CD8-positive, alpha-beta T cell (primary cell): ENCODE measurements at regions of chr11 and their contacts with region 1.

Region 1: DNA sequence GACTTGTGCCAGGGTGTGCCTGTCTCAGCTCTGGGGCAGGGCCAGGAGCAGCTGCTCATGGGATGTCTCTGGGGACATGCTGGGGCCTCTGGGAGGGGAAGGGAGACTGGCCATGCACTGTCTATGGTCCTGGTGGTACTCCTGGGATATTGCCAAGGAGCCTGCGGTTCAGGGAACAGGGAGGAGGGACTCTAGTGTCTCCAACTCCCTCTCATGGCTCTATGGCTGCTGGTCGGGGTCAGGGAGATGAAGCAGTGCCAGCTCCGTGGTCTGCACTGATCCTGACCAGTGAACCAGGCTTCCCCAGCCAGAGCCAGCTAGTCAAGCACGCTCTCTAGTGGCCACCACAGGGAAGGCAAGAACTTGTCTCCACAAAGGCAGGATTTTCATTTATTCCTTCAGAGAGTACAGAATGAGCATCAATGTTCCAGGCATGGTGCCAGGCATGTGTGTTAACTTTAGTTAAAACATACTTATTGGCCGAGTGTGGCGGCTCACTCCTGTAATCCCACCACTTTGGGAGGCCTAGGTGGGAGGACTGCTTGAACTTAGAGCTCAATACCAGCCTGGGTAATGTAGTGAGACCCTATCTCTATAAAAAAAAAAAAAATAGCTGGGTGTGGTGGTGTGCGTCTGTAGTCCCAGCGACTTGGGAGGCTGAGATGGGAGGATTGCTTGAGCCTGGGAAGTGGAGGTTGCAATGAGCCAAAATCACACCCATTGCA is 2.5 kb upstream of the BEST1 start:
- DNase-seq: peak; percentile 34 to 78 (median 69)
- ATAC-seq: peak; percentile 82
- H3K4me3 ChIP-seq: no peak overlapping the region
- H3K4me3 Mint-ChIP-seq: no peak overlapping the region
- H3K27ac ChIP-seq: no peak overlapping the region
- H3K27ac Mint-ChIP-seq: no peak overlapping the region
- H3K4me1 ChIP-seq: no peaks in the 10 kb centered on the region
- H3K4me1 Mint-ChIP-seq: no peaks in the 10 kb centered on the region
- H3K27me3 ChIP-seq: no peaks in the 10 kb centered on the region
- H3K27me3 Mint-ChIP-seq: peaks cover 8% of the 10 kb centered on the region
- CTCF ChIP-seq: peak; percentile 76

Region 2: DNA sequence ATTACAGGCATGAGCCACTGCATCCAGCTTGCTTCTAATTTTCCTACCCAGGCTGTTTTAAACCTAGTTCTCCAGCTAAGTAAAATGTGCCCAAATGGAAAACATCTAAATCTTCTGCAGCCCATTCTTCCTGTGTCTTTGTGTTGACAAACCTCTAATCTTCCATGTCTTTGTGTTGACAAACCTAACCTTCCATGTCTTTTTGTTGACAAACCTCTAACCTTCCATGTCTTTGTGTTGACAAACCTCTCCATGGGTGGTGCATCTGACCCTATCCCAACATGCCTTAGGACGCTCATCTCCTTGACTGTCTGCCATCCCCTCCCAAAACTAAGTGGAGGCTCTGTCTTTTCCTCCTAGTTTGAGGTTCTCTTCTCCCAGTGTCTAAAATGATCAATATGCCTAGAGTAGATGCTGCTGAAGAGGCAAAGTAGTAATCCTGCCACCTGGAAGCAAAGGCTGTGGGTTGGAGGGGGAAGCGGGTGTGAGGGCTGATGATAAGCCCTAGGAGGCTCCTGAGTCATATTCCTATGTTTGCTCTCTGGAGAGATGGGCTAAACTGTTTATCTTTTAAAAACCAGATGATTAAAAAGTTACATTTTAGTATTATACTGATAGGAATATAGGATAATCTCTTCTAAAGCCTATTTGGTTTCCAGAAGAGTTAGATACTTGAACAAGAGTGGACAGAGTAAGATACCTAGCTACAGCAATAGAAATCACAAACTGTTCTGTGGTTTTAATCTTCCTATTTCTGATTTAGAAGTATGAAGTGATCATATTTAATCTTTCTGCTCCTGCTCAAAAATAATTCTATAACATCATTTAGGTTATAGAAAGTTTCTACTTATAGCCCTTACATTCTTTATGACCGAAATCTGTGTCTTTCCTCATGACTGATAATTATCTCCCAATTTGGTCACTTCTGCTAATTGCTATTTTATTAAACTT is 147.0 kb before region 1 on chr11:
- CTCF ChIA-PET with region 1: interaction called, 70 read pairs
- POLR2A ChIA-PET with region 1: interaction called, 4 read pairs
- intact Hi-C with region 1: loop called in 1 of 2 experiments (anchors 1 kb)
- DNase-seq: no peak
- ATAC-seq: no peak
- H3K4me3 ChIP-seq: no peak overlapping the region
- H3K4me3 Mint-ChIP-seq: no peak overlapping the region
- H3K27ac ChIP-seq: no peak overlapping the region
- H3K27ac Mint-ChIP-seq: no peak overlapping the region
- H3K4me1 ChIP-seq: no peaks in the 10 kb centered on the region
- H3K4me1 Mint-ChIP-seq: peaks cover 3% of the 10 kb centered on the region
- H3K27me3 ChIP-seq: no peaks in the 10 kb centered on the region
- H3K27me3 Mint-ChIP-seq: no peaks in the 10 kb centered on the region
- CTCF ChIP-seq: no peak

Region 3: DNA sequence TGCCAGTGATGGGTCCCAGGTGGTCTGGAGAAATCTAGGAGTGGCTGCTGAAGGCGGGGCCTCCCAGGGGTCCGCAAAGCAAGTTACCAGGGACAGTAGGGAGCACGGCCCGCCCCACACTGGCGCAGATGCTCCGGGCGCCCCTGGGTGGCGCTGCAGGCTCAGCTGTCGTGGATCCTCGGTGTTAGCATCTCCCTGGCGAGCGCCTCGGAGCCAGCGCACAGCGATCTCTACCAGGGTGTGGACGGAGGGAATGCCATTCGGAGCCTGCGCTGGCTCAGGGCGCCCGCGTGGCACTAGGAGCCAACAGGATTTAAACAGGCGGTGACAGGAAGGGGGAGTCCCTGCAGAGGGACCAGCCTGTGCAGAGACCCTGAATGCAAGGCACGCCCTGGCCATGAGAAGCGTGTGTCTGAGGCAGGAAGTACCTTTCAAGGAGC is 76.5 kb before region 1 on chr11:
- CTCF ChIA-PET with region 1: interaction called, 21 read pairs
- POLR2A ChIA-PET with region 1: no interaction called
- intact Hi-C with region 1: loop called (anchors 2 kb)
- DNase-seq: peak; percentile 30 to 74 (median 64)
- ATAC-seq: peak; percentile 94
- H3K4me3 ChIP-seq: no peak overlapping the region
- H3K4me3 Mint-ChIP-seq: peak overlapping the region; percentile 64
- H3K27ac ChIP-seq: no peak overlapping the region
- H3K27ac Mint-ChIP-seq: no peak overlapping the region
- H3K4me1 ChIP-seq: no peaks in the 10 kb centered on the region
- H3K4me1 Mint-ChIP-seq: peaks cover 3% of the 10 kb centered on the region
- H3K27me3 ChIP-seq: no peaks in the 10 kb centered on the region
- H3K27me3 Mint-ChIP-seq: no peaks in the 10 kb centered on the region
- CTCF ChIP-seq: peak; percentile 89

Region 4: DNA sequence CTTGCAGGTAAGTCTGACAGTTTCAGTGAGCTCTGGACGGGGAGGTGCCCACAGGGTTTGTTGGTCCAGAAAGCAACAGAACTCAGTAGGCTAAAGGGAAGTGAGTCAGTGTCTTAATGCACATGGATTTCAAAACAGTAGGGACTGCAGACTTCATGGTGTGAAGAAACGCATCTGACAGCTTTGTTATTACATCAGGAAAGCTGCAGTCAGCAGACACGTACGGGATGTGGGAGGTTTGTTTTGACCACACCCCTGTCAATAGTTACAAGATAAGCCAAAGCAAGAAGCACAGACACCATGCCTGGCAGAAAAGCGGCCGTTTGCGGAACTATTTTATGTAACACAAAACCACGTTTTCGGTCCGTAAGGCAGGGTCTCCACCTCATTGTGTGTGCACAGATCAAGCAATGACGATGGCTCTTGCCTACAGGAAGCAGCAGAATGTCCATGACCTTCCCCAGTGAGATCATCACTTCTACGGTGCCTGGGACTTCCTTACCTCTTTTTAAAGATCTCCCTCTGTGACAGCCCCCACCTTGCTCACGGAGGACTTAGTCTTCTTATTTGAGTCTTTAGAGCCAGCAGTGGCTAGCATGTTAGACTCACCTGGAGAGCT is 77.9 kb after region 1 on chr11:
- CTCF ChIA-PET with region 1: no interaction called
- POLR2A ChIA-PET with region 1: no interaction called
- intact Hi-C with region 1: loop called in 1 of 2 experiments (anchors 5 kb)
- DNase-seq: peak; percentile 41 to 97 (median 77)
- ATAC-seq: peak; percentile 87
- H3K4me3 ChIP-seq: peak overlapping the region in 1 of 2 experiments; percentile 24
- H3K4me3 Mint-ChIP-seq: peak overlapping the region; percentile 44
- H3K27ac ChIP-seq: peak overlapping the region; percentile 78 to 91
- H3K27ac Mint-ChIP-seq: peak overlapping the region; percentile 95
- H3K4me1 ChIP-seq: peaks cover 15% of the 10 kb centered on the region
- H3K4me1 Mint-ChIP-seq: peaks cover 20% of the 10 kb centered on the region
- H3K27me3 ChIP-seq: no peaks in the 10 kb centered on the region
- H3K27me3 Mint-ChIP-seq: no peaks in the 10 kb centered on the region
- CTCF ChIP-seq: no peak

Region 5: GRCh38 chr11:62186195-62186594 is 238.5 kb after region 1 on chr11:
- CTCF ChIA-PET with region 1: no interaction called
- POLR2A ChIA-PET with region 1: no interaction called
- intact Hi-C with region 1: no loop called
- DNase-seq: no peak
- ATAC-seq: no peak
- H3K4me3 ChIP-seq: no peak overlapping the region
- H3K4me3 Mint-ChIP-seq: no peak overlapping the region
- H3K27ac ChIP-seq: no peak overlapping the region
- H3K27ac Mint-ChIP-seq: no peak overlapping the region
- H3K4me1 ChIP-seq: no peaks in the 10 kb centered on the region
- H3K4me1 Mint-ChIP-seq: no peaks in the 10 kb centered on the region
- H3K27me3 ChIP-seq: peaks cover 0 to 2% of the 10 kb centered on the region in 2 experiments
- H3K27me3 Mint-ChIP-seq: peaks cover 45% of the 10 kb centered on the region
- CTCF ChIP-seq: no peak